ENCODE measurements at regions of chr6 and their contacts with region 1.

Region 1: GRCh38 chr6:35240840-35241801 is 18.4 kb upstream of the ZNF76 start:
- DNase-seq: peak; percentile 80 to 89 (median 86)
- ATAC-seq: peak; percentile 96
- H3K4me3 ChIP-seq: no peak overlapping the region
- H3K27ac ChIP-seq: no peak overlapping the region
- H3K4me1 ChIP-seq: peaks cover 0 to 8% of the 10 kb centered on the region in 2 experiments; a peak in 1 of 5 replicates
- H3K27me3 ChIP-seq: no peaks in the 10 kb centered on the region
- CTCF ChIP-seq: peak; percentile 88 to 99 (median 97)
- EP300 ChIP-seq: no peak
- POLR2A ChIP-seq: no peak
- RAD21 ChIP-seq: peak; percentile 87 to 92

Region 2: GRCh38 chr6:34094474-34095135 is 1146.5 kb before region 1 on chr6:
- CTCF ChIA-PET with region 1: no interaction called
- POLR2A ChIA-PET with region 1: no interaction called
- in situ Hi-C with region 1: no loop called
- intact Hi-C with region 1: no loop called
- DNase-seq: no peak
- ATAC-seq: no peak
- H3K4me3 ChIP-seq: no peak overlapping the region
- H3K27ac ChIP-seq: no peak overlapping the region
- H3K4me1 ChIP-seq: peaks cover 0 to 15% of the 10 kb centered on the region in 2 experiments; a peak in 1 of 5 replicates
- H3K27me3 ChIP-seq: peaks cover 17 to 88% of the 10 kb centered on the region in 2 experiments; a peak in 4 of 5 replicates
- CTCF ChIP-seq: no peak
- EP300 ChIP-seq: no peak
- POLR2A ChIP-seq: no peak
- RAD21 ChIP-seq: no peak

Region 3: GRCh38 chr6:34953061-34954025 is 287.8 kb before region 1 on chr6:
- CTCF ChIA-PET with region 1: no interaction called
- POLR2A ChIA-PET with region 1: no interaction called
- in situ Hi-C with region 1: no loop called
- intact Hi-C with region 1: no loop called
- DNase-seq: no peak
- ATAC-seq: no peak
- H3K4me3 ChIP-seq: no peak overlapping the region
- H3K27ac ChIP-seq: no peak overlapping the region
- H3K4me1 ChIP-seq: peaks cover 0 to 4% of the 10 kb centered on the region in 2 experiments; a peak in 2 of 5 replicates
- H3K27me3 ChIP-seq: no peaks in the 10 kb centered on the region
- CTCF ChIP-seq: no peak
- EP300 ChIP-seq: no peak
- POLR2A ChIP-seq: no peak
- RAD21 ChIP-seq: no peak

Region 4: GRCh38 chr6:35146453-35146852 is 94.7 kb before region 1 on chr6:
- CTCF ChIA-PET with region 1: interaction called, 6 read pairs
- POLR2A ChIA-PET with region 1: interaction called, 4 read pairs
- in situ Hi-C with region 1: no loop called
- intact Hi-C with region 1: loop called (anchors 2 kb)
- DNase-seq: peak in 3 of 4 experiments; percentile 28 to 50 (median 38)
- ATAC-seq: peak; percentile 76
- H3K4me3 ChIP-seq: no peak overlapping the region
- H3K27ac ChIP-seq: no peak overlapping the region
- H3K4me1 ChIP-seq: peaks cover 0 to 3% of the 10 kb centered on the region in 2 experiments; a peak in 2 of 5 replicates
- H3K27me3 ChIP-seq: peaks cover 22 to 29% of the 10 kb centered on the region in 2 experiments
- CTCF ChIP-seq: peak; percentile 69 to 79 (median 71)
- EP300 ChIP-seq: no peak
- POLR2A ChIP-seq: no peak
- RAD21 ChIP-seq: peak; percentile 42 to 73

Region 5: DNA sequence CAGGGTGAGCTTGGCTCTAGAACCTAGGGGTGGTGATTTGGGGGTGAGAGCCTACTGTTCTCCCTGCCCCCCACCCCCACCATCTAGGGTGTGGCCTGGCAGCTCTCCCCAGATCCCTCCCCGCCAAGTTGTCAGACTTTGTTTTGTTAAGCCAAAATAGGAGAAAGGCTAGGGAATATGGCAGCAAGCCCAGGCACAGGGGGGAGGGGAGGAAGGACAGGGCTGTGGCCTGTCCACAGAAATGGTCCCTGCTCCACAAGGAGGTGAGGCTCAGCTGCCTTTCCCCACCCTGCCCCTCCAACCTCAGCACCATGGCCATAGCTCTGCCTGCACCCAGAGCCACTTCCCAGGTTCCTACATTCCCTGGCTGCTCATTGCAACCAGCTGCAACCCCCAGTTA is 10.2 kb before region 1 on chr6:
- CTCF ChIA-PET with region 1: no interaction called
- POLR2A ChIA-PET with region 1: interaction called, 26 read pairs
- in situ Hi-C with region 1: no loop called
- intact Hi-C with region 1: no loop called
- DNase-seq: no peak
- ATAC-seq: no peak
- H3K4me3 ChIP-seq: no peak overlapping the region
- H3K27ac ChIP-seq: no peak overlapping the region
- H3K4me1 ChIP-seq: no peaks in the 10 kb centered on the region
- H3K27me3 ChIP-seq: no peaks in the 10 kb centered on the region; a peak in 1 of 5 replicates
- CTCF ChIP-seq: no peak
- EP300 ChIP-seq: no peak
- POLR2A ChIP-seq: no peak
- RAD21 ChIP-seq: no peak

Region 6: GRCh38 chr6:35259194-35259947 is 18.2 kb after region 1 on chr6 and contains the start of gene ZNF76:
- CTCF ChIA-PET with region 1: interaction called, 6 read pairs
- POLR2A ChIA-PET with region 1: interaction called, 17 read pairs
- in situ Hi-C with region 1: no loop called
- intact Hi-C with region 1: no loop called
- DNase-seq: peak; percentile 99 to 100 (median 99)
- ATAC-seq: peak; percentile 92
- H3K4me3 ChIP-seq: peak within 1 kb of the TSS; percentile 79
- H3K27ac ChIP-seq: peak within 1 kb of the TSS; percentile 95
- H3K4me1 ChIP-seq: peaks cover 18 to 46% of the 10 kb centered on the region in 2 experiments
- H3K27me3 ChIP-seq: no peaks in the 10 kb centered on the region
- CTCF ChIP-seq: no peak
- EP300 ChIP-seq: peak; percentile 67
- POLR2A ChIP-seq: peak; percentile 84
- RAD21 ChIP-seq: no peak
- polyA plus RNA-seq, gene ZNF76: 1.2 to 1.3 TPM

Measured in K562 (cell line).